ENCODE measurements at regions of chr14 and their contacts with region 1.

Region 1: DNA sequence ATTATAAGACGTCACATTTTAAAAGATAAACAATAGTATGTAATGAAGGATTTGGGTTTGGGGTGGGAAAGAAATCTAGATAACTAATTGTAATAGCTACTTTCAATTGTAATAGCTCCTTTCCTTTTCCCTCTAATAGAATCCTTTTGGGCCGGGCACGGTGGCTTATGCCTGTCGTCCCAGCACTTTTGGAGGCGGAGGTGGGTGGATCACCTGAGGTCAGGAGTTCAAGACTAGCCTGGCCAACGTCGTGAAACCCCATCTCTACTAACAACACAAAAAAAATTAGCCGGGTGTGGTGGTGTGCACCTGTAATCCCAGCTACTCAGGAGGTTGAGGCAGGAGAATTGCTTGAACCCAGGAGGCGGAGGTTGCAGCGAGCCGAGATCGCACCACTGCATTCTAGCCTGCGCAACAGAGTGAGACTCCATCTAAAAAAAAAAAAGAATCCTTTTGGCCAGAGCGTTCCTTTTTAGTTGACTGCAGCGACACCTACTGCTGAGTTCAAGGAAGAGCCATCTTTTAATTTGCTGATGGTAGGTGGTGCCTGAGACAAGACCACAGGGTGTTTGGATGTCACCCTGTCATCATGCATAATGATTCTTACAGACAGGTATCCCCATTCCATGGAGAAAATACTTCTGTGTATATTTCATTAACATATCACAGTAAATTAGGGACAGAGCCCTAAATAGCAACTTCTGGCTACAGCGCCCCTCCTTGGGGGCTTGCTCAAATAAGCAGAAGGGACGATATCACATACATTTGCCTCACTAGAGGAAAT is 79.5 kb downstream of the ARMH4 start:
- DNase-seq: peak in 4 of 5 donors; percentile 63 to 89 (median 78)
- H3K4me3 ChIP-seq: peak overlapping the region in 1 of 3 donors; percentile 31
- H3K27ac ChIP-seq: no peak overlapping the region
- H3K4me1 ChIP-seq: no peaks in the 10 kb centered on the region
- H3K27me3 ChIP-seq: no peaks in the 10 kb centered on the region
- CTCF ChIP-seq: peak; percentile 70

Region 2: GRCh38 chr14:57486767-57487379 is 585.6 kb before region 1 on chr14:
- intact Hi-C with region 1: loop called (anchors 10 kb)
- DNase-seq: peak in 2 of 5 donors; percentile 76 to 88
- H3K4me3 ChIP-seq: no peak overlapping the region
- H3K27ac ChIP-seq: peak overlapping the region in 1 of 2 donors; percentile 4
- H3K4me1 ChIP-seq: peaks cover 0 to 12% (median 4%) of the 10 kb centered on the region in 3 donors
- H3K27me3 ChIP-seq: no peaks in the 10 kb centered on the region
- CTCF ChIP-seq: peak; percentile 72

Region 3: DNA sequence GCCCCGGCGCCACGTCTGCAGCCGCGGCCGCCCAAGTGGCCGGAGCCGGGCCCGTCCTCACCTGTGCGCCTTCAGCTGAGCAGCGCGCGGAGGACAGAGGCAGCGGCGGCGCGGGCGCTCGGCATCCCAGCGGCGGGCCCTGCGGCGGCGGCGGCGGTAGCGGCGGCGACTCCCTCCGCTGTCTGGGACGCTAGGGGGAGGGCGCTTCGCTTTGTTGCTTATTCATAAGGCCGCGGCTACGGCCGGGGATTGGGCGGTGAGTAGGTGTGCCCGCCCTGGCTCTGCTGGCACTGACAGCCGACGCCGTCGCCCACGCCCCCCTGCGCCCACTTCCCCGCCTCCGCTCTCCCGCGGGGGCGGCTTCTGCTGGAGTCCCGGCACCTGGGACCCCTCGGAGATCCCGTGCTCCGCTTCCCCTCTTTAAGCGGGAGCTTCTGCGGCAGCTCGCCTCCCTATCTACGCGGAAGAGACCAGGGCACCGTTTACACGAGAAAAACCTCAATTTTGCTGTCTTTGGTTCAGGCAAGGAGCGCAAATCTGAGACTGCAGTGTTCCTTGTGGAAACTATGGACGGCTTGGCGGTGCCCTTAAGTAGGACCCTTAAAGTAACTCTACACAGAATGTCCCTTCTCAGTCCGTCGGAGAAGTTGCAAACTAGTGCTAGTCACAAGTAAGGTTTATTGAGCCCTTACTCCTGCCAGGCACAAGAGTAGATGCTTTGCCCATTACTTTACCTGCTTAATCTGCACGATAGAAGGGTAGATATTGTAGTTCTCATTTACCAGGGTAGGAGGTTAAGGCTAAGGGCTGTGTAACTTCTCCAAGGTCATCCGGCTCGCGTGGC is 79.8 kb after region 1 on chr14 and contains the start of gene ARMH4:
- intact Hi-C with region 1: no loop called
- DNase-seq: peak; percentile 92 to 96 (median 94)
- H3K4me3 ChIP-seq: peak within 1 kb of the TSS; percentile 79 to 92 (median 92)
- H3K27ac ChIP-seq: peak within 1 kb of the TSS; percentile 33 to 45
- H3K4me1 ChIP-seq: peaks cover 0 to 10% (median 3%) of the 10 kb centered on the region in 3 donors
- H3K27me3 ChIP-seq: no peaks in the 10 kb centered on the region
- CTCF ChIP-seq: peak; percentile 7
- total RNA-seq, gene ARMH4: 4.9 TPM

Region 4: GRCh38 chr14:58166005-58166983 is 93.8 kb after region 1 on chr14:
- intact Hi-C with region 1: no loop called
- DNase-seq: peak; percentile 80 to 90 (median 84)
- H3K4me3 ChIP-seq: no peak overlapping the region
- H3K27ac ChIP-seq: no peak overlapping the region
- H3K4me1 ChIP-seq: peaks cover 0 to 2% (median 0%) of the 10 kb centered on the region in 3 donors
- H3K27me3 ChIP-seq: no peaks in the 10 kb centered on the region
- CTCF ChIP-seq: peak; percentile 81

Measured in kidney (tissue), 22 donors.